Lower leg skin (tissue), 4 donors: ENCODE measurements at regions of chr4 and their contacts with region 1.

Region 1: GRCh38 chr4:19693936-19694570 is 557.7 kb upstream of the SLIT2 start:
- DNase-seq: no peak
- H3K4me3 ChIP-seq: no peak overlapping the region
- CTCF ChIP-seq: no peak
- POLR2A ChIP-seq: no peak

Region 2: GRCh38 chr4:20520901-20521300 is 826.8 kb after region 1 on chr4:
- intact Hi-C with region 1: loop called (anchors 10 kb)
- DNase-seq: no peak
- H3K4me3 ChIP-seq: no peak overlapping the region
- CTCF ChIP-seq: no peak
- POLR2A ChIP-seq: no peak